Kidney (tissue), 22 donors: ENCODE measurements at regions of chr11 and their contacts with region 1.

Region 1: GRCh38 chr11:63023841-63024648 is 8.4 kb upstream of the SLC22A8 start:
- DNase-seq: peak; percentile 90 to 92 (median 91)
- H3K4me3 ChIP-seq: no peak overlapping the region
- H3K27ac ChIP-seq: peak overlapping the region; percentile 8 to 20
- H3K4me1 ChIP-seq: peaks cover 0 to 6% (median 0%) of the 10 kb centered on the region in 3 donors
- H3K27me3 ChIP-seq: no peaks in the 10 kb centered on the region
- CTCF ChIP-seq: peak; percentile 100

Region 2: DNA sequence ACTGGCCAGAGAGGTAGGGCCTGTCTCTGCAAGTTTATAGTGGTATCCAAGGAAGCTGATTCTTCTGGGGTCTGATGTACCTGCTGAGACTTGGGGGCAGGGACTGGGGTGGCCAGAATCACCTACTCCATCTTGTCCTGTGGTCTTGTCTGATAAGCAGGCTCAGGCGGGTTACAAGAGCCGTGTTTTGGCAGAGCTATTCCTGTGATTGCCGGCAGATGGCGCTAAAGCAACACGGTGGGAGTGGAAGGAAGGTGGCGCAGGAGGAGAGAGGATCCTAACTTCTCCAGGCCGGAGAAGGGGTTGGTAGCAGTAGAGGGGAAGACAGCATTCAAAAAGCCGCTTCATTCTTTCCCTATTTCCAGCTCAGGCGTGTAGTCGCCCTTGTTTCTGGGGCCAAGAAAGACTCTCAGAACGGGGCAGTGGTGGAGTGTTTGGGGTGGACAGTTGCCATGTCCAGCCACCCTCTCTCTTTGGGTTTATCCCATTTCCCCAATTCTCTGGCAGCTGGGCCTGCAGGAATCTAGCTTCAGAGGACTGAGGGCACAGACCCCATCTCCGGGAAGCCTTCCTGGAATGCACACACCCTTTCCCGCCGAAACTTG is 118.0 kb before region 1 on chr11:
- intact Hi-C with region 1: loop called (anchors 5 kb)
- DNase-seq: peak; percentile 88 to 93 (median 90)
- H3K4me3 ChIP-seq: no peak overlapping the region
- H3K27ac ChIP-seq: no peak overlapping the region
- H3K4me1 ChIP-seq: peaks cover 0 to 23% (median 11%) of the 10 kb centered on the region in 3 donors
- H3K27me3 ChIP-seq: no peaks in the 10 kb centered on the region
- CTCF ChIP-seq: peak; percentile 100